ENCODE measurements at regions of chr3 and their contacts with region 1.

Region 1: GRCh38 chr3:196115678-196116083 is 33.8 kb upstream of the TFRC start:
- DNase-seq: no peak
- H3K4me3 ChIP-seq: no peak overlapping the region
- H3K27ac ChIP-seq: no peak overlapping the region
- H3K4me1 ChIP-seq: no peaks in the 10 kb centered on the region
- H3K27me3 ChIP-seq: no peaks in the 10 kb centered on the region
- CTCF ChIP-seq: no peak

Region 2: DNA sequence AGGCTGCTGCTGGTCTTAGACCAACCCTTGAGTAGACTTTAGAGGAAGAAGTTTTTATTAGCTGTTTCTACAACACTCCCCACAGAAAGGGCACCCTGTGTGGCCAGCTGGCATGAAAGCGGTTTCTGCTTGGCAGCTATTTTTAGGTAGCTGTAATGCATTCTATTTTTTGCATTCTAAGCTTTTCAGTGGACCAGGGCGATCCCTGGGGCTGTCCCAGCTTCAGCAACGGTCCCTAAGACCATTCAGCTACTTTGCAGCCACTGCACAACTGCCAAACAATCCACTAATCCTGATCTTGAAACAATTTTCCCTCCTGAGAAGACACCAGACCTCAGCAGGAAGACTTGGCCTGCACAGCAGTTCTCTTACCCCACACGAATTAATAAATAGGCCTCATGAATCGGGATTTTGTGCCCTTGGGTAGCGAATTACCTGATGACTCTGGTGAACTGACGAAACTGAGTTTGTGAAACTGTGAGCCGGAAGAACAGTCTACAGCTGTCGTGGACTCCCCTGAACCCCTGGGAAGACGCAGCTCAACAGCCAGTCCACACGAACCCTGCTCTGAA is 19.2 kb before region 1 on chr3:
- CTCF ChIA-PET with region 1: no interaction called
- POLR2A ChIA-PET with region 1: interaction called, 15 read pairs
- intact Hi-C with region 1: no loop called
- DNase-seq: no peak
- H3K4me3 ChIP-seq: no peak overlapping the region
- H3K27ac ChIP-seq: no peak overlapping the region
- H3K4me1 ChIP-seq: no peaks in the 10 kb centered on the region
- H3K27me3 ChIP-seq: no peaks in the 10 kb centered on the region
- CTCF ChIP-seq: no peak

Region 3: DNA sequence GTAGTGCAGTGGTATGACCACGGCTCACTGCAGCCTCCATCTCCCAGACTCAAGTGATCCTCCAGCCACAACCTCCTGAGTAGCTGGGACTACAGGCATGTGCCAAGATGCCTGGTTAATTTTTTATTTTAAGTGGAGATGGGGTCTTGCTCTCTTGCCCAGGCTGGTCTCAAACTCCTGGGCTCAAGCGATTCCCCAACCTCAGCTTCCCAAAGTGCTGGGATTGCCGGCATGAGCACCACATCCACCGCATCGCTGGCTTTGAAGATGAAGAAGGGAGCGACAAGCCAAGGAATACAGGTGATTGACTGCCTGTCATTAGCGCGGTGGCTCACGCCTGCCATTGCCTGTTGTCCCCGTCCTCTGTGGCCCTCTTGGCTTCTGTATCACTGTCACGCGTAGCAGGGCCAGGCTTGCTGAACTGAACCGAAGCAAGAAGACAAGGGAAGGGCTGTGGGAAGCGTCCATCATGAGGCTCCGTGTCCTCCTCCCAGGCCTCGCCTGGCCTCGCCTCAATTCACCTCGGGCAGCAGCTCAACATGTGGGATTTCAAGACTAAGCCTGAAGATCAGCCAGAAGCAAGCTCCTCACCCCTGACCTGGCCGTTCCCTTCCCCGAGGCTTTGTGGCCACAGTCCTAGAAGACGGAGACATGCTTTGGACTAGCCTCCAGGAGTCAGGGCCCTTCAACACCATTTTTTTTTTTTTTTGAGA is 12.6 kb after region 1 on chr3:
- CTCF ChIA-PET with region 1: no interaction called
- POLR2A ChIA-PET with region 1: interaction called, 12 read pairs
- intact Hi-C with region 1: no loop called
- DNase-seq: no peak
- H3K4me3 ChIP-seq: no peak overlapping the region
- H3K27ac ChIP-seq: no peak overlapping the region
- H3K4me1 ChIP-seq: no peaks in the 10 kb centered on the region
- H3K27me3 ChIP-seq: no peaks in the 10 kb centered on the region
- CTCF ChIP-seq: no peak

Region 4: DNA sequence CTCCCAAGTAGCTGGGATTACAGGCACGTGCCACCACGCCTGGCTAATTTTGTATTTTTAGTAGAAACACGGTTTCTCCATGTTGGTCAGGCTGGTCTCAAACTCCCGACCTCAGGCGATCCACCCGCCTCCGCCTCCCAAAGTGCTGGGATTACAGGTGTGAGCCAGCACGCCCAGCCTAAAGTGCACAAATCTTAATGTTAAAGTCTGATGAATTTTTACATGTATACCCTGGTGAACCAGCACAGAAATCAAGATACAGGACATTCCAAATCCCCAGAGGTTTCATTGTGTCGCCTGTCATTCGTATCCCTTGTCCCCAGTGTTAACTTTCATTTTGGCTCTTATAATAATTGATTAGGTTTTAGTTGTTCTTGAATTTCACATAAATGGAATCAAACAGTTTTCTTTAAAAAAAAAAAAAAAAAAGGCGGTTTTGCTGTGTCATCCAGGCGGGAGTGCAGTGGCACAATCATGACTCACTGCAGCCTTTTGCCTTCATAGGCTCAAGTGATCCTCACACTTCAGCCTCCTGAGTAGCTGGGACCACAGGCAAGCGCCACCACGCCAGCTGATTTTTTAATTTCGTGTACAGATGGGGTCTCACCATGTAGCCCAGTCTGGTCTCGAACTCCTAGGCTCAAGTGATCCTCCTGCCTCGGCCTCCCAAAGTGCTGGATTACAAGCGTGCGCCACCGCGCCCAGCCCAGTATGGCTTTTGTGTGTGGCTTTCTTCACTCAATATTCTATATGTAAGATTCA is 224.0 kb after region 1 on chr3:
- CTCF ChIA-PET with region 1: no interaction called
- POLR2A ChIA-PET with region 1: no interaction called
- intact Hi-C with region 1: no loop called
- DNase-seq: no peak
- H3K4me3 ChIP-seq: no peak overlapping the region
- H3K27ac ChIP-seq: no peak overlapping the region
- H3K4me1 ChIP-seq: peaks cover 4% of the 10 kb centered on the region
- H3K27me3 ChIP-seq: no peaks in the 10 kb centered on the region
- CTCF ChIP-seq: no peak